ENCODE measurements at regions of chr12 and their contacts with region 1.

Region 1: DNA sequence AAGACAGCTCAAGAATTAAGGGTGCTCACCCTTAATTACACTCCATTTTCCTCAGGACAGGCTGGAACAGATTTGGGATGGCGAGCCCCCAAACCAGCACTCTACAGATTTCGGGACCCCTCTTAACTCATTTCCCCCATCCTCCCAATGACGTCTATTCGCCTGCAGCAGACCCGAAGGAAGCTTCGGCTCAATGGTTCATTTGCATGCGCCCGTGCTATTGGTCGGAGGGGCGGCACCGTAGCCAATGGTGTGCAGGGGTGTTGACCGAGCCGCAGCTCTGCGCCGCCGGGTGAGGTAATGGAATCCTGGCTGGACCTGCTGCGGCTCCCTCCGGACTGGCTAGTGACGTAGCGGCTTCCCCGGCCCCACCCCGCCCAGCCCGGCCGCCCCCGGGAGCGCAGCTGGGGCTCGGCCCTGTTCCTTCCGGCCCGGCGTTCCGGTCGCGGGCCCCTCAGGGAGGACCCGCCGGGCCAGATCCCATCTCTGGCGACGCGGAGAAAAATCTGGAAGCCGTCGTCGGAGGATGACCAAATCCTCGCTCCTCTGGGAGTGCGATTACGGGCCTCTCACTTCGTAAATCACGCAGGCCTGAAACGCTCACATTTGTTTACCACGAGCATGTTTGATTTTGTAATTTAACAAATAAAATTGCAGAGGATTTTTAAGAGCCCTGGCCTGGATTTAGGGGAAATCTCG is 18.3 kb upstream of the NR4A1 start:
- DNase-seq: peak; percentile 98
- H3K4me3 ChIP-seq: peak overlapping the region in 2 of 3 experiments; percentile 30 to 60
- H3K27ac ChIP-seq: peak overlapping the region; percentile 74
- H3K4me1 ChIP-seq: peaks cover 21% of the 10 kb centered on the region
- H3K27me3 ChIP-seq: no peaks in the 10 kb centered on the region
- CTCF ChIP-seq: no peak
- POLR2A ChIP-seq: peak; percentile 26

Region 2: DNA sequence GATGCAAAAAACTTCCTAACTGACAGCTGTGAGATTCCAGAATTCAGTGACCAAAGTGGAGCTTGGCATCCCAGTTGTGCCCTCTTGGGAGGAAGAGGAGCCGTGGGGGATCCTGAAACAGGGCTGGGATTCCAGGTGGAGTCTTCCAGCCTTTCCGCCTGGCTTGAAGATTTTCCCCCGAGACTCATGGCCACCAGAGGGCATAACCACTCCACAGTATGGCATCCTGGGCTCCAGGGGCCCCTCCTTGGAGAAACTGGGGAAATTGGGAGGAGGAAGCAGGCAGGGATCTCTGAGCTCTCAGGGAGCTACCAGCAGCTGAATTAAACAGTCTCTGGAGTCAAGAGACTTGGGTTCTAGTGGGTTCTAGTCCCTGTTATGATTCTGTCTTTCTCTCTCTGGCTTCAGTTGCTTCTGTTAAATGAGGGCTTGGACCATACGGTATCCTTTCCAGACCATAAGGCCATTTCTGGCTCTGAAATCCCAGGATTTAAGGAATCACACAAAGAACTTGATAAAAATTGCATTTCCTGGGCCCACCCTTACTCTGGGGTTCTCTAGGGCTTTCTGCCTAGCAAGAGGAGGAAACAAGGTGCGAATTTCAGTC is 28.8 kb before region 1 on chr12:
- CTCF ChIA-PET with region 1: interaction called, 26 read pairs
- POLR2A ChIA-PET with region 1: interaction called, 15 read pairs
- dilution Hi-C with region 1: no loop called
- intact Hi-C with region 1: no loop called
- DNase-seq: peak; percentile 60
- H3K4me3 ChIP-seq: no peak overlapping the region
- H3K27ac ChIP-seq: no peak overlapping the region
- H3K4me1 ChIP-seq: peaks cover 22% of the 10 kb centered on the region
- H3K27me3 ChIP-seq: no peaks in the 10 kb centered on the region
- CTCF ChIP-seq: peak; percentile 72 to 79
- POLR2A ChIP-seq: no peak

Region 3: GRCh38 chr12:52050761-52051541 is 18.0 kb after region 1 on chr12 and contains the start of gene NR4A1:
- CTCF ChIA-PET with region 1: interaction called, 8 read pairs
- POLR2A ChIA-PET with region 1: no interaction called
- dilution Hi-C with region 1: no loop called
- intact Hi-C with region 1: loop called (anchors 1 kb)
- DNase-seq: peak; percentile 96
- H3K4me3 ChIP-seq: peak within 1 kb of the TSS; percentile 32 to 46 (median 44)
- H3K27ac ChIP-seq: peak within 1 kb of the TSS; percentile 85
- H3K4me1 ChIP-seq: peaks cover 20% of the 10 kb centered on the region
- H3K27me3 ChIP-seq: no peaks in the 10 kb centered on the region
- CTCF ChIP-seq: peak; percentile 5 to 10
- POLR2A ChIP-seq: no peak
- total RNA-seq, gene NR4A1: 6.8 and 10.2 TPM in 2 replicates

Region 4: DNA sequence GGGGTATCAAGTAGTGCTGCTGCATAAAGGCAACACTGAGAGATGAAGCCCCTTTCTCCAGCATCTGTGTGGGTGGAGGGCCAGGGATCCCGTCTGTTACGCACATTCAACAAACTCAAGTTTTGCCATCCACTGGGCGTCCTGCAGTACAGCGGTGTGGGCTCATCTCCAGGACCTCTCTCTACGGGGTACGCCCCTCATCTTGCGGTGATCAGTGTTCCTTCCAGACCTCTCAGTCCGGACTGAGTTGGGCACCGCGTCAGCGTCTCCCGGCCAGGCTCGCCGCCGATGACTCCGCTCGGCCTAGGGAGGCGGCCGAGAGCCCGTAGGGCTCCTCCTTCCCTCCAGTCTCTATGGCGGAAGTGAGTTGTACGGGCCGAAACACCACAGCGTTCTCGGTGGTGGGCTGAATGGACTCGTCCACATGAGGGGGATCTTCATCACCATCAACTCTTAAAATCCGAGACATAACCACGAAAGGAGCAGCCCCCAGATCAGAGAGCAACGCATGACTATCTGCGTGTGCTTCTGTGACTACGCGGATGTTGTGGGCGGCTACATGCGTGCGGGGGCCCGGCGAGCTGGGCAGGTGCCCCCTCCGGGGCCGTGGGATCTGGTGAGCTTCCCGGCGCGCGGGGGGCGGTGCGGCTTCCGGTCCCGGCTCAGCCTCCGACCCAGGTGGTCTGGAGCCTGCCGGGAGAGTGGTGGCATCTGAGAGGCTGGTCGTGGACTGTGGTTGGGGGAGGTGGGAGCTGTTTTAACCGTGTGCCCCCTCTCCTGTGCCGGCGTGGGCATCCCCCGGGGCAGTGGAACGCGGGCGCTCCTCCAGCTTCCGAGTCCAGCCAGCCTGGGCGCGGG is 36.6 kb after region 1 on chr12 and contains the start of gene ATG101:
- CTCF ChIA-PET with region 1: interaction called, 29 read pairs
- POLR2A ChIA-PET with region 1: interaction called, 7 read pairs
- dilution Hi-C with region 1: no loop called
- intact Hi-C with region 1: loop called (anchors 1 kb)
- DNase-seq: peak; percentile 95
- H3K4me3 ChIP-seq: peak within 1 kb of the TSS; percentile 69 to 81 (median 73)
- H3K27ac ChIP-seq: peak within 1 kb of the TSS; percentile 93
- H3K4me1 ChIP-seq: peaks cover 12% of the 10 kb centered on the region
- H3K27me3 ChIP-seq: no peaks in the 10 kb centered on the region
- CTCF ChIP-seq: peak; percentile 83 to 90
- POLR2A ChIP-seq: peak; percentile 83
- total RNA-seq, gene ATG101: 41.6 and 43.3 TPM in 2 replicates

Region 5: GRCh38 chr12:52121824-52122539 is 89.0 kb after region 1 on chr12:
- CTCF ChIA-PET with region 1: interaction called, 163 read pairs
- POLR2A ChIA-PET with region 1: interaction called, 3 read pairs
- dilution Hi-C with region 1: no loop called
- intact Hi-C with region 1: no loop called
- DNase-seq: peak; percentile 33
- H3K4me3 ChIP-seq: no peak overlapping the region
- H3K27ac ChIP-seq: no peak overlapping the region
- H3K4me1 ChIP-seq: peaks cover 21% of the 10 kb centered on the region
- H3K27me3 ChIP-seq: peaks cover 0 to 1% of the 10 kb centered on the region in 2 experiments
- CTCF ChIP-seq: peak; percentile 58 to 87
- POLR2A ChIP-seq: no peak